ENCODE measurements at regions of chr12 and their contacts with region 1.

Region 1: DNA sequence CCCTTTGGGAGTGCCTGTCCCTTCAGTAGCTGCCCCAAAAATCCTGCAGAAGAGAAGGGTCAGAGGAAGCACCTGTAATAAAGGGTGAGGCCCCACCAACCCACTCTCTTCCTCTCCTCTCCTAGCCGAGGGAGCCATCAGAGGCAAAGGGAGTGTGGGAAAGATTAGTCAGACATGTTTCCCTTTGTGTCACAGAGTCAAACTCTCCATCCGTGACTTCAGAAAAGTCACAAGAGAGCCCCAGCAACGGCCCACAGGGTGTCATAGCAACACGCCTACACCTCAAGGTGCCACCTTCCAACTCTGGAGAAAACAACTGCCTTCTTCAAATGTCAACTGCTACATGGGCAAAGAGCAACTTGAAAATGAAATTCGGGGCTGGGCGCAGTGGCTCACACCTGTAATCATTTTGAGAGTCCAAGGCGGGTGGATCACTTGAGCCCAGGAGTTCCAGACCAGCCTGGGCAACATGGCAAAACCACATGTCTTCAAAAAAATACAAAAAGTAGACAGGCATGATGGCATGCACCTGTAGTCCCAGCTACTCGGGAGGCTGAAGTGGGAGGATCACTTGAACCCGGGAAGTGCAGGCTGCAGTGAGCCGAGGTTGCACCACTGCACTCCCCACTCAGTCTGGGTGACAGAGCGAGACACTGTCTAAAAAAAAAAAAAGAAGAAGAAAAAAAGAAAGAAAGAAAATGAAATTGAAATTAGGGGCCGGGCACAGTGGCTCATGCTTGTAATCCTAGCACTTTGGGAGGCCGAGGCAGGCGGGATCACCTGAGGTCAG is 17.7 kb upstream of the CD27 start:
- DNase-seq: no peak
- ATAC-seq: no peak
- H3K4me3 ChIP-seq: no peak overlapping the region
- H3K27ac ChIP-seq: no peak overlapping the region
- H3K4me1 ChIP-seq: peaks cover 16% of the 10 kb centered on the region
- H3K27me3 ChIP-seq: no peaks in the 10 kb centered on the region
- CTCF ChIP-seq: no peak
- POLR2A ChIP-seq: no peak

Region 2: GRCh38 chr12:5960783-5961182 is 466.3 kb before region 1 on chr12:
- intact Hi-C with region 1: no loop called
- DNase-seq: no peak
- ATAC-seq: no peak
- H3K4me3 ChIP-seq: no peak overlapping the region
- H3K27ac ChIP-seq: no peak overlapping the region
- H3K4me1 ChIP-seq: no peaks in the 10 kb centered on the region
- H3K27me3 ChIP-seq: no peaks in the 10 kb centered on the region
- CTCF ChIP-seq: no peak
- POLR2A ChIP-seq: no peak

Region 3: DNA sequence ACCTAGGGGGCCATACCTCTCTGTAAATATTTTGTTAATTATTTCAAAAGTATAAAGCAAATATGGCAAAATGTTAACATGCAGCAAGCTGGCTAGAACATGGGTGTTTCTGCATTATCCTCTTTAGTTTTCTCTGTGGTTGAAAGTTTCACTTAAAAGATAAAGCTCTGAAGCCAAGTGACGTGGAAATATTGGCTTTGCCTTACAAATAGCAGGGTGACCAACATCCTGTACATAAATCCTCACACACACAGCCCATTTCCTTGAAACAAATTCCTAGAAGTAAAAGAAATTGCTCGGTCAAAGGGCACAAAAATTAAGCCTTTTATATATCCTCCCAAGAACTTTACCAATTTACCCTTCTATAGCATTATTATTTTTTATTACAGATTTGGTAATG is 292.0 kb before region 1 on chr12:
- intact Hi-C with region 1: no loop called
- DNase-seq: no peak
- ATAC-seq: no peak
- H3K4me3 ChIP-seq: no peak overlapping the region
- H3K27ac ChIP-seq: no peak overlapping the region
- H3K4me1 ChIP-seq: no peaks in the 10 kb centered on the region
- H3K27me3 ChIP-seq: no peaks in the 10 kb centered on the region
- CTCF ChIP-seq: no peak
- POLR2A ChIP-seq: no peak

Region 4: DNA sequence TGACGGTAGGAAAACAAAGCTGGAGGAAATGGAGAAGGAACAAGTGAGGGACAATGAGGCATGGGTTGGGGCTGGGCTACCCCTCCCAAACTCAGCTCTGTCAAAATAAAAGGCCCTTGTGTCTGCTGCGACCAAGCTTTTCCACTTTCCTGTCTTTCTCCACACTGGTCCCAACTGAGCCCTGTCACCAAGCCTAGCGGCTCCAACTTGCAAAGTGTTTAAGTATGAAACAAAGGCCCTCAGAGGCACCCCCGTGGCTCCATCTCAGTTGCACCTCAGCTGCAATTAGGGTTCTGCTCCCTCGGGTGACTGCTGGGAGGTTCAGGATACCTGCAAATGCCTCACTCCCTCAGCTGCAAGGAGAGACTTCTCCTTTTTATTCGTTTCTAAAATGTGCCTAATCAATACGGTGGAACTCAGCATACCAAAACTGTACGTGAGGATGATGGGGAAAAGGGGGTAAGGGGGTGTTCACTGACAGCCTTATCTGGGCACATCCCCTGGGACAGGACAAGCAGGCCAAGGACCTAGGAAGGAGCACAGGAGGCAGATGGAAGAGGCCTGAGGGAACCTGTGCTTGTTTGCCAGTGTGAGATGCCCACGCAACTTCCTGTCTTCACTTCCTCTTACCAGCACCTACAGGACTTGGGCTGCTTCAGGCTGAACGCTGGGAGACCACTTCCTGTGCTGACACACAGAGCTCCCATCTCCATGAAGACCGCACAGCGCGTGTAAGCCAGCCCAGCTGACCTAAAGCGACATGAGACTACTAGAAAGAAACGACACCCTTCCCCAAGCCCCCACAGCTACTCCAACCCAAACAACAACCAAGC is 34.5 kb after region 1 on chr12:
- intact Hi-C with region 1: loop called (anchors 5 kb)
- DNase-seq: peak in 3 of 4 donors; percentile 25 to 81 (median 38)
- ATAC-seq: no peak
- H3K4me3 ChIP-seq: no peak overlapping the region
- H3K27ac ChIP-seq: peak overlapping the region in 2 of 4 donors; percentile 30 to 59
- H3K4me1 ChIP-seq: no peaks in the 10 kb centered on the region
- H3K27me3 ChIP-seq: no peaks in the 10 kb centered on the region
- CTCF ChIP-seq: no peak
- POLR2A ChIP-seq: no peak

Region 5: DNA sequence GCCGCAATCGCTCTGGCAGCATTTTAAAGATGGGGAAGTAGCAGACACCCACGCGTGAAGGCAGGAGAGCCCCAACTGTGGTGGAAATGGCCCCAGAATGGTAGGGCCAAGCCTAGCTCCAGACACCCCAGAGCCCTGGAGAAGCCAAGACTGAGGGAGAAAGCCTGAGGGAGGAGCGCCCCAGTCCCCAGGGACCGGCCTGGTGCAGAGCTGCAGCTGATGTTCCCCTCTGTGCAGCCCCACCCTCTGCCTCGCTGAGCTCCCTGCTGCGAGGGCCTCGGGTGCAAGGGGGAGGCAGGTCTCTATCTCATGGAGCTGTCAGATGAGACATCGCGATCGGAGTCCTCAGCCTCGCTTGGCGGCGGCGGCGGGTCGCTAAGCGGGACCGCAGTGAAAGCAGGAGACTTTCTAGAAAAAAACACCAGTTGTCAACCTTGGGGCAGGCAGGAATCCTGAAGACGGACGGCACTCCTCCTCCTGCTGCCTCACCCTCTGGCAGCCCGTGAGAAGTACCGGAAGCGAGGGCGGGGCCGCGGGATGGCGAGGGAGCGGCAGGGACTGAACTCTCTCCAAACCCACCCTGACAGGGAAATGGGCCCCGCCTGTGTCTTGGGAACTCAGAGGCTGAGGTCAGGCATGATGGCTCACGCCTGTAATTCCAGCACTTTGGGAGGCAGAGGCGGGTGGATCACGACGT is 113.3 kb after region 1 on chr12:
- intact Hi-C with region 1: loop called (anchors 5 kb)
- DNase-seq: peak; percentile 46 to 62 (median 52)
- ATAC-seq: peak; percentile 51
- H3K4me3 ChIP-seq: no peak overlapping the region
- H3K27ac ChIP-seq: peak overlapping the region in 1 of 4 donors; percentile 39
- H3K4me1 ChIP-seq: peaks cover 20% of the 10 kb centered on the region
- H3K27me3 ChIP-seq: no peaks in the 10 kb centered on the region
- CTCF ChIP-seq: no peak
- POLR2A ChIP-seq: no peak

Region 6: DNA sequence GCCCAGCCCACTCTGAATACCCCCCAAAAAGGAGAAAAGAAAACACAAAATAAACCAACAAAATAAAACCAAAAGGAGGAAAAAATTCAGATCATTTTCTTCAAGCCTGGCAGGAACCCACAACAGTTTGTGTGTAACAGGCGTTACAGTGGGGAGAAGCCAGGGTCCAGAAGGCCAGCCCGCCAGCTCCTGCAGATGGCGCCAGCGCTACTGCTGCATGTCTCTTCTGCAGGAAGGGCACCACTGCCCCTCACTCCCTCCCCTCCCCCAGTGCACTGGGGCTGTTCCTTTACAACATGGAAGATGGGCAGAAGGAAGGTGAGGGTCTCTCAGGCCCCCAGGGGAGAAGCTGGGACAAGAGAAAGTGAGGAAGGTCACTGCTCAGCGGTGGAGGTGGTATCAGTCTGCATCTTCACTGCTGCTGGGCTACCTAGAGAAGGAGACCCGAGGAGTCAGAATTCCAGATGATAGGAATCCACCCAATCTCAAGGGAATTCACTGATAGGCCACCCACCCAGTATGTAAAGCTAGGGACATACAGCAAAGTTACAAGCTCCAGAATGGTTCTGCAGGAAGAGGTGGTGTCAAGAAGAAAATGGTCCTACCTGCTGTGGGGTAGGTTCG is 143.3 kb after region 1 on chr12:
- intact Hi-C with region 1: no loop called
- DNase-seq: peak; percentile 61 to 75 (median 68)
- ATAC-seq: peak; percentile 25
- H3K4me3 ChIP-seq: no peak overlapping the region
- H3K27ac ChIP-seq: no peak overlapping the region
- H3K4me1 ChIP-seq: peaks cover 26% of the 10 kb centered on the region
- H3K27me3 ChIP-seq: no peaks in the 10 kb centered on the region
- CTCF ChIP-seq: peak in 5 of 7 experiments; percentile 10 to 25 (median 15)
- POLR2A ChIP-seq: no peak

Region 7: GRCh38 chr12:6735448-6736191 is 308.5 kb after region 1 on chr12:
- intact Hi-C with region 1: no loop called
- DNase-seq: peak; percentile 69 to 81 (median 72)
- ATAC-seq: peak; percentile 91
- H3K4me3 ChIP-seq: no peak overlapping the region
- H3K27ac ChIP-seq: no peak overlapping the region
- H3K4me1 ChIP-seq: peaks cover 4% of the 10 kb centered on the region
- H3K27me3 ChIP-seq: no peaks in the 10 kb centered on the region
- CTCF ChIP-seq: peak; percentile 60 to 86 (median 72)
- POLR2A ChIP-seq: no peak

Measured in body of pancreas (tissue), 4 donors.